Ascending aorta (tissue), 2 donors: ENCODE measurements at regions of chr6 and their contacts with region 1.

Region 1: GRCh38 chr6:160348142-160349019 is at the start of gene SLC22A3:
- DNase-seq: no peak
- H3K4me3 ChIP-seq: peak within 1 kb of the TSS; percentile 76 to 86
- H3K27ac ChIP-seq: peak within 1 kb of the TSS; percentile 91 to 96
- H3K4me1 ChIP-seq: peaks cover 0 to 2% of the 10 kb centered on the region in 2 donors
- H3K27me3 ChIP-seq: no peaks in the 10 kb centered on the region
- CTCF ChIP-seq: peak; percentile 30 to 42 (median 38)
- total RNA-seq, gene SLC22A3: 29.6 TPM

Region 2: DNA sequence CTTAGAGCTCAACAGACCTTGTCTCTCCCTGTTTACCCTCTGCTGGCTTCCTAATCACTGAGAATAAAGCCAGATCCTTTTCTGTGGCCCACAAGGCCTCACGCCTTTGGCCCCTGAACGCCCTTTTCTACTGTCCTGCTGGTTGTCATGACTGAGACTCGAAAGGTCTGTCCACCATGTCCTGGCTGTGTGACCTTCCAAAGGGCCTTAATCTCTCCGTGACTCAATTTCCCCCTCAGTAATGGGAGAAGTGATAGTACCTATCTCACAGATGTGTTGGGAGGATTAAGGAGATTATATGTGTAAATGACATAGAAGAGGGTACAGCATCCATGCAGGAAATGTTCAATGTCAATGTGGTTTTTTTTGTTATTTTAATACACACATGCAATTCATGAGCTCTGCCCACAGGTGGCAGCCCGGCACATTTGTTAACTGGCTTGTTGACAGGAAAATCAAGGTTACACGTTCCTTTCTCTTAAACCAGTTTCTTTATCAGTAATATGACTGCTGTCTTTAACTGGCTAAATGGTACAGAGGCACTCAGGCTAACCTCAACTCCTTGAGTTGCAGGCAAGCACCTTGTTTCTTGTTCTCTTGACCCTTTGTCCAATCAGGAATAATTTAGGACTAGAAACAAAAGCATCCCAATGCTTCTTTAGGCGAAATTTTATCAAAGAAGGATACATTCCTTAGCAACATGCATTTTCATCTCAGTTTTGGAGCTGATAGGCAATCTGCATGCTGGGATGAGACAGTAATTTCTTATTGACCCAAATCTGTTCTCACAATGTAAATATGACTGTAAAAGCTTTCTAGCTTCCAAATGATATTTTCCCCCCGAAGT is 210.2 kb before region 1 on chr6:
- intact Hi-C with region 1: loop called (anchors 2 kb)
- DNase-seq: peak in 1 of 2 donors; percentile 71
- H3K4me3 ChIP-seq: no peak overlapping the region
- H3K27ac ChIP-seq: peak overlapping the region; percentile 90 to 91
- H3K4me1 ChIP-seq: peaks cover 18 to 34% of the 10 kb centered on the region in 2 donors
- H3K27me3 ChIP-seq: no peaks in the 10 kb centered on the region
- CTCF ChIP-seq: peak; percentile 66 to 75 (median 66)

Region 3: GRCh38 chr6:160297310-160297709 is 51.1 kb before region 1 on chr6:
- intact Hi-C with region 1: loop called (anchors 5 kb)
- DNase-seq: no peak
- H3K4me3 ChIP-seq: no peak overlapping the region
- H3K27ac ChIP-seq: no peak overlapping the region
- H3K4me1 ChIP-seq: peaks cover 7 to 36% of the 10 kb centered on the region in 2 donors
- H3K27me3 ChIP-seq: no peaks in the 10 kb centered on the region
- CTCF ChIP-seq: no peak

Region 4: DNA sequence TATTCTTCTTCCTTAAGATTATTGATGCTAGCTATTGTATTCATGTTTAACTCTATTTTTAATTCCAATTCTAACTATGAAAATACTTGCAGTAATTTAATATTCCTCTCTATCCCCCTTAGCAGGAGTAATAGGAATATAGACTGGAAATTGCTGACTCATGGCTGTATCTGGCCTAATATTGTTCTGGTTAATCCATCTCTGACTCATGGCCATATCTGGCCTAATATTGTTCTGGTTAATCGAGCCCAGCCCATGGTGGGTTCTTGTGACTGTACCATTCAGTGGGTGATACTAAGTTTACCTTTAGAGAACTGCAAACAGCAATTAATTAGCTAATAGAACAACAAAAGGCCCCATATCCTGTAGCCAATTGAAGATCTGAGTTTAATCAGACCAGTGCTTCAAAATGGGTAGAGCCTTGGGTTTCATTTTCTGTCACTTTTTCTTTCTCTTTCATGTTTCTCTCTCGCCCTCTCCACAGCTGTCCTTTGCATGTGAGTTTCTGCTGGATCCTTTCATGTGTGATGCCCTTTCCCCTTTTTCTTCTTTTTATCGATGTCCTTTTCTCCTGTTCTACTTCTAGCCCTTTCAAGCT is 50.4 kb after region 1 on chr6:
- intact Hi-C with region 1: loop called (anchors 2 kb)
- DNase-seq: no peak
- H3K4me3 ChIP-seq: no peak overlapping the region
- H3K27ac ChIP-seq: peak overlapping the region; percentile 87 to 94
- H3K4me1 ChIP-seq: peaks cover 3 to 62% of the 10 kb centered on the region in 2 donors
- H3K27me3 ChIP-seq: no peaks in the 10 kb centered on the region
- CTCF ChIP-seq: no peak